Activated naive CD4-positive, alpha-beta T cell treated with anti-CD3 and anti-CD28 coated beads, Interleukin-2, amount 10 ng/mL, durations not matched to agents 7 days and 5 days (primary cell): ENCODE measurements at regions of chr6 and their contacts with region 1.

Region 1: GRCh38 chr6:31739639-31740396 is at the start of gene MSH5:
- DNase-seq: peak; percentile 98
- H3K4me3 Mint-ChIP-seq: peak within 1 kb of the TSS; percentile 100
- H3K27ac Mint-ChIP-seq: peak within 1 kb of the TSS; percentile 93
- H3K4me1 Mint-ChIP-seq: peaks cover 52% of the 10 kb centered on the region
- H3K27me3 Mint-ChIP-seq: peaks cover 5% of the 10 kb centered on the region

Region 2: DNA sequence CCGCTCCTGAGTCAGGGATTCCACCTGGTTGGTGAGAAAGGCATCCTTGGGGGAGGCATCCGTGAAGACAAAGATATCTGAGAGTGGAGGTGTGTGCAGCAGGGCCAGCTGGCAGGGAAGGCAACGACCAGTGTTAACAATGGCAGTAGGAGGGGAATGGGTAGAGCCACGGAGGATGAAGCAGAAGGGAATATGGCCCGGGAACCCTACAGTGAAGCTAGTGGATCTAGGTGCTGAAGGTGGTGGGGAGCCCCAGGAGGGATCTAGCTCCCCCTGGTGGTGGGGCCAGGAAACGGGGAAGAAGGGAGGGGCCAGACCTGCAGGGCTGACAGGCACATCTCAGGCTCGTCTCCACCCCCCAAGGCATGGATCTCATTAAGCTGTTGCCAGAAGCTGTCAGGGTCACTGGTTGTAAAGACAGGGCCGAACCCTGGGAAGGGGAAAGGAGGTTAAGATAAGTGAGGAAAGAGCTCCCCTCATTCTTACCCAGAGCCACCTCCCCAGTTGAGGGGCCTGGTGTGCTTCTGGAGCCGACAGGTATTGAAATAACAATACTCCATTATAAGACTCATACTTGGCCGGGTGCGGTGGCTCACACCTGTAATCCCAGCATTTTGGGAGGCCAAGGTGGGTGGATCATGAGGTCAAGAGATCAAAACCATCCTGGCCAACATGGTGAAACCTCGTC is 30.0 kb after region 1 on chr6:
- CTCF ChIA-PET with region 1: interaction called, 23 read pairs
- DNase-seq: peak; percentile 86
- H3K4me3 Mint-ChIP-seq: no peak overlapping the region
- H3K27ac Mint-ChIP-seq: peak overlapping the region; percentile 61
- H3K4me1 Mint-ChIP-seq: peaks cover 52% of the 10 kb centered on the region
- H3K27me3 Mint-ChIP-seq: no peaks in the 10 kb centered on the region

Region 3: DNA sequence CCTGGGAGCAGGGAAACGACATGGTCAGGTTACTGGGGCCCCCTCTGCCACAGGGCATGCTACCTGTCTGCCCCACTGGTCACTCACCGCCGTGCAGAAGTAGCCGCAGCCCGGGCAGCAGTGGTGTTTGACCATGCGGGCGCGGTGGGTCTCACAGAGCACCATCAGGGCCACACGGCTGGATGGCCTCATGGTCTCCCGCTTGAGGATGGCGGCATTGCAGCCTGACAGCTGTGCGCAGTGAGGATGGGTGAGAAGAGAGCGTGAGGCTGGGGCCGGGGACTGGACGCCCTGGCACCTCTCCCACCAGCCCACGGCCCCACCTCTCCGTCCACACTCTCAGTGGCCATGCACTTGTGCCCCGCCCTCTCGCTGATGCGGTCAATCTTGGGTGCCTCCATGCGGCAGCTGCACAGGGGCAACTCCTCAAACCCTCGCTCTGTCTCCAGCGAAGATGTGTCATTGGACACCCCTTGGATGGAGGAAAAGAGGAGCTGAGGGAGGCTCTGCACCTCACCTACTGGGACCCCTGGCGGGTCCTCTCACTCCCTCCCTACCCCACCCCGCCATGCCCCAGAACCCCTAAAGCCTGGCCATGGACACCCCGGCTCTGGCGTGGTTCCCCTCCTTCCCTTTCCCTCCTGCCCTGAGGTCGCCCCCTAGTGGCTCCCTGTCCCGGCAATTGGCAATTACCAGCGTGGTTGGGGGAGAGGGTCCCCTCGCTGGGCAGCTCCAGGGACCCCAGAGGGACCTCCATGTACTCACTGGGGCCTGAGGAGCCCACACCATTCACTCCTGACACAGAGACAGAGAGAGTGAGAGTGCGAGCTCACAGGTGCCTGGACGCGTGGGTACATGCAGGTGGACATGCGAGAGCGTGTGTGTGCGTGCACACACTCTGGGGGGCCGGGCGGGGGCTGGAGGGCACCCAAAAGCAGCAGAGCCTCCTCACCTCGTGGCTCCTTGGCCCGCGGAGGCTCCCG is 148.7 kb after region 1 on chr6:
- CTCF ChIA-PET with region 1: no interaction called
- DNase-seq: peak; percentile 60
- H3K4me3 Mint-ChIP-seq: no peak overlapping the region
- H3K27ac Mint-ChIP-seq: no peak overlapping the region
- H3K4me1 Mint-ChIP-seq: peaks cover 8% of the 10 kb centered on the region
- H3K27me3 Mint-ChIP-seq: no peaks in the 10 kb centered on the region